Gastrocnemius medialis (tissue), 4 donors: ENCODE measurements at regions of chr3 and their contacts with region 1.

Region 1: DNA sequence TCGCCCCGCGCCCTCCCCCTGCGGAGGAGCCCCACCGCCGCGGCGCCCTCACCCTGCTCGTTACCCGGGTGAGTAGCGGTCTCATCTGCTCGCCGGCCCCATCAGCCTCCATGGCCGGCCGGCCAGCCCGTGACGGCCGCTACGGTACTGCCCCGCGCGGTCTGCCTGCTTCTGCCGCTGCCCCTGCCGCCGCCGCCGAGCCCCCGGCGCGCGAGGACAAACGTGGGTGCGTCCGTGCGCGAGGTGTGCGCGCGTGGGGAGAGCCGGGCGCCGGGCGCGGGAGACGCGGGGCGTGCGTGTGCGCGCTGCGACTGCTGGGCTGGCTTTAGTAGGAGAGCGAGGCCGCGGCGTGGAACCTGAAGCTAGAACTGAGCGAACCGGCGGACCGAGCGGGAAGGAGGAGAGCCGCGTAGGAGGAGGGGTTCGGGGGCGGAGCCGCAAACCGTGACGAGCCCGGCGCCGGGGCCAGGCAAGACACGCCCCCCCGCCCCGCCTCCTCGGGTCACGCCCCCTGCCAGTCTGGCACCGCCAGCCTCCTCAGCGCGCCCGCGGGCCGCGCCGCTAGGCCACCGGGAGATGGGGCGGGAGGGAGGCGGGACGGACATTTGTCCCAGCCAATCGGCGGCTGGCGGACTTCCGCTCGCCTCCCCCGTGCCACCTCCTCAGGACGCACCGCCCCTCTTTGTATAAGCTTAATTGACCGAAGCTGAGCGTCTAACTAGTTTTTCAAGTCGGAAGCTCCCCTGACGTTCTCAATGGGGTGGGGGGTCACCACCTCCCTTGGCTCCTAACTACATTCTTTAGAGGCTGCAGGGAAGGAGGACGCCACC is at the start of gene SLC4A7:
- DNase-seq: peak; percentile 95 to 96
- ATAC-seq: peak; percentile 87
- H3K4me3 ChIP-seq: peak within 1 kb of the TSS; percentile 66 to 96 (median 80)
- H3K27ac ChIP-seq: peak within 1 kb of the TSS; percentile 80 to 96 (median 88)
- H3K4me1 ChIP-seq: peaks cover 9 to 28% of the 10 kb centered on the region in 2 donors
- H3K27me3 ChIP-seq: no peaks in the 10 kb centered on the region
- CTCF ChIP-seq: no peak
- POLR2A ChIP-seq: peak; percentile 94 to 97
- total RNA-seq, gene SLC4A7: 7.5 to 19.8 (median 12.8) TPM

Region 2: GRCh38 chr3:26960382-26960781 is 523.8 kb before region 1 on chr3:
- in situ Hi-C with region 1: no loop called
- intact Hi-C with region 1: no loop called
- DNase-seq: no peak
- ATAC-seq: no peak
- H3K4me3 ChIP-seq: no peak overlapping the region
- H3K27ac ChIP-seq: no peak overlapping the region
- H3K4me1 ChIP-seq: no peaks in the 10 kb centered on the region
- H3K27me3 ChIP-seq: no peaks in the 10 kb centered on the region
- CTCF ChIP-seq: no peak
- POLR2A ChIP-seq: no peak

Region 3: DNA sequence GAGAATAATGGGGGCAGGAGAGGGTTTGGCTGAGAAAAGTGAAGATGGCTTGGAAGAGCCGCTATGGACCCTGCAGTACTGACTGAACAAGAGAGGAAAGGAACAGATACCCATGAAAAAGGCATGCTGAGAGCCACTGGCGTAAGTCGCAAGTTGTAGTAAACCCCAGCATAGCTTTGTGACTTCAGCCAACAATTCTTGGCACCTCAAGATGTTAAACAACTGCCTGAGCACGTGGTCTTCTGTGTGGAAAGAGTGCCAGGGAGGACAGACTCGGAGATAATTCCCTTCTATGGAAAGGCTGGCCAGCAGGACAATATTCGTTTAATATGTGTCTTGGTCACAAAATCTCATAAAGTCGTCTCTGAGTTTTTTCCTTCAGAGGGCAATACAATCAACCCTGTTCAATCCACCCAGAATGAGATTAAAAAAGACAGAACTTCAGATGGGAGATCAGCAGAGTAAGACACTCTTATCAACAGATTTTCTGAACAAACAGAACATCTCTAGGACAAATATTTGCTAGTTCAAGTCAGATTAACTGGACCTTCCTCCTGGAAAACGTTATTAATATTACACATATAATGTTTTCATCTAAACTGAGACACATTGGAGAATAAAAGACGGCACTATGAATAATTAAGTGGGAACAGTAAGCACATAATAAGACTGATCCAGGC is 164.2 kb before region 1 on chr3:
- in situ Hi-C with region 1: no loop called
- intact Hi-C with region 1: loop called (anchors 5 kb)
- DNase-seq: peak; percentile 61 to 66
- ATAC-seq: peak; percentile 95
- H3K4me3 ChIP-seq: no peak overlapping the region
- H3K27ac ChIP-seq: peak overlapping the region; percentile 61 to 76 (median 72)
- H3K4me1 ChIP-seq: peaks cover 20 to 21% of the 10 kb centered on the region in 2 donors
- H3K27me3 ChIP-seq: no peaks in the 10 kb centered on the region
- CTCF ChIP-seq: no peak
- POLR2A ChIP-seq: no peak

Region 4: DNA sequence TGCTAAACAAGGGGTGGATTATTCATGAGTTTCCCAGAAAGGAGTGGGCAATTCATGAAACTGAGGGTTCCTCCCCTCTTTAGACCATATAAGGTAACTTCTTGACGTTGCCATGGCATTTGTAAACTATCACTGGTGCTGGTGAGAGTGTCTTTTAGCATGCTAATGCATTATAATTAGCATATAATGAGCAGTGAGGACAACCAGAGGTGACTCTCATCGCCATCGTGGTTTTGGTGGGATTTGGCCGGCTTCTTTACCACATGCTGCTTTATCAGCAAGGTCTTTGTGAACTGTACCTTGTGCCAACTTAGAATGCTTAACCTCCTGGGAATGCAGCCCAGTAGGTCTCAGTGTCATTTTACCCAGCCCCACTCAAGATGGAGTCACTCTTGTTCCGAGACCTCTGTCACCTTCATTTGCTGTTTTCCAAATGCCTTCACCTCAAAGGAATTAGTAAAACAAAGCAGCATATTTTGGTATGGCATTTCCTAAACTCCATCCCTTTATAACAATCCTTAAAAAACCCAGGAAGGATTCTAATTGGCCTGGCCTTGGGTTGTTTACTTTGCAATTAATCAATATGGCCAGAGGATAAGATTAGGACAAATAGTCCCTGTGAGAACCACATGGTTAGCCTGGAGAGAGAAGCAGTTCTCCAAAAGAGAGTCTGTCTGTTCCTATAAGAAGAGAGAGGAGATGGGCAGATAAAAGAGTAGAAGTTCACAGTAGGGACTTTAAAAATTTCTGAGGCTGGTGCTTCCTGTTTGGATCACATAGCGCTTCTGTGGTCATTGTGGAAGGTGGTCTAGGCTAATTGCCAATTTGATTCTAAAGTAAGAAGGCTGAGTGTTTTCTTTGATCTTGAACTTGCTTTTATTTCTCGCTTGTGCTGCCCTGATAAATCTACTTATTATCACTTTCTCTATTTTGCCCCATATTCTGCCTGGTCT is 393.1 kb after region 1 on chr3:
- in situ Hi-C with region 1: no loop called
- intact Hi-C with region 1: no loop called
- DNase-seq: no peak
- ATAC-seq: no peak
- H3K4me3 ChIP-seq: no peak overlapping the region
- H3K27ac ChIP-seq: no peak overlapping the region
- H3K4me1 ChIP-seq: no peaks in the 10 kb centered on the region
- H3K27me3 ChIP-seq: no peaks in the 10 kb centered on the region
- CTCF ChIP-seq: no peak
- POLR2A ChIP-seq: no peak

Region 5: DNA sequence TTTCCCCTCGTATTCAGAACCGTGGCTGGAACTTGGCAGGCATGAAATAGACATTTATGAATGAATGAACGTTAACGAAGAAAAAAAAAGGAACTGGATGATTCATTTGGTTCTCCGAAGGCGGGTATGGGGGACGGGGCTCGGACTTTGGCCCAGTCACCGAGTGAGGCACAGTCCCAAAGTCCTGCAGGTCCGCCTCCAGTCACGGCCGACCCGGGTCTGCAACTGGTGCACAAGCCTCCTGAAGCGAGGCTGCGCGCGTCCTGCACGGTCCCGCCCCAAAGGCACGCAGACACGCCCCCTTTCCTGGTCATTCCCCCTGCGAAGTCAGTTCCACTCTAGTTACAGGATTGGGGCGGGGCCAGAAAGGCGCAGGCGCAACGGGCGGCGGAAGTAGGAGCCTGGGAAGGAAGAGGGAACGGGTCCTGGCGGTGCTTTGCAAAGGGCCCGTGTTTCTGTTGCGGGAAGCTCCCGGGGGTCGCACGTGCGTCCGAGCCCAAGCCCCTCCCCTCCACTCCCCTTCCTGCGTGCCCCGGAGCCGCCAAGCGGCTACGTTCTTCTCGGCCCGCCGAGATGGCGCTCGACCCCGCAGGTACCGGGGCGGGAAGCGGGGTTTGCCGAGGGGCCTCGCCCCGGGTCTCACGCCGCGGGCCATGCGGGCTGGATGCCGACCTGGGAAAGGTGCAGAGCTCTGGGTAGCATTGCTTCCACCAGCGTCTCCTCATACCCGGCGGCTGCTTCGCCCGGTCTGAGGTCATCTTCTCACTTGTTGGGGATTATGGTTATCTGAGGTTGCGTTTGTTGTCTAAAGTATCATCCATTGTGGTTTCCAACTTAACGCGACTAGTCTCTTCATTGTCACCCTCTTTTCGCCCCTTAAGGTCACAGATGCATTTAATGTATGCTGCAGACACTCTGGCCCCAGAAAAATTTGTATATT is 757.3 kb after region 1 on chr3 and contains the start of gene CMC1:
- in situ Hi-C with region 1: loop called in 1 of 4 experiments (anchors 25 kb)
- intact Hi-C with region 1: no loop called
- DNase-seq: peak; percentile 95
- ATAC-seq: peak; percentile 98 to 99
- H3K4me3 ChIP-seq: peak within 1 kb of the TSS; percentile 87 to 99 (median 95)
- H3K27ac ChIP-seq: peak within 1 kb of the TSS; percentile 78 to 88 (median 83)
- H3K4me1 ChIP-seq: peaks cover 6 to 16% of the 10 kb centered on the region in 2 donors
- H3K27me3 ChIP-seq: no peaks in the 10 kb centered on the region
- CTCF ChIP-seq: no peak
- POLR2A ChIP-seq: peak; percentile 73 to 79
- total RNA-seq, gene CMC1: 2.7 to 27.6 (median 18.4) TPM

Region 6: GRCh38 chr3:28348629-28349483 is 864.6 kb after region 1 on chr3 and contains the starts of genes AZI2 and ZCWPW2:
- in situ Hi-C with region 1: no loop called
- intact Hi-C with region 1: loop called (anchors 1 kb)
- DNase-seq: peak; percentile 95 to 97
- ATAC-seq: peak; percentile 87 to 91
- H3K4me3 ChIP-seq: peak within 1 kb of the TSS; percentile 76 to 98 (median 92)
- H3K27ac ChIP-seq: peak within 1 kb of the TSS; percentile 94 to 100 (median 98)
- H3K4me1 ChIP-seq: peaks cover 44 to 48% of the 10 kb centered on the region in 2 donors
- H3K27me3 ChIP-seq: no peaks in the 10 kb centered on the region
- CTCF ChIP-seq: peak in 3 of 5 experiments; percentile 18 to 38 (median 34)
- POLR2A ChIP-seq: peak; percentile 93
- total RNA-seq, gene AZI2: 27.6 to 90.9 (median 59.2) TPM
- total RNA-seq, gene ZCWPW2: 0.55 to 1.6 (median 1.3) TPM in 3 of 4 donors, not detected in the other